PC-3 (cell line): ENCODE measurements at regions of chr13 and their contacts with region 1.

Region 1: GRCh38 chr13:100514788-100515409 is 73.7 kb downstream of the GGACT start:
- DNase-seq: peak; percentile 69
- ATAC-seq: peak; percentile 96
- H3K4me3 ChIP-seq: no peak overlapping the region
- H3K27ac ChIP-seq: no peak overlapping the region
- H3K4me1 ChIP-seq: peaks cover 4% of the 10 kb centered on the region; the same call in 1 of the 2 replicates
- H3K27me3 ChIP-seq: no peaks in the 10 kb centered on the region
- CTCF ChIP-seq: peak; percentile 91

Region 2: GRCh38 chr13:99656092-99656745 is 858.7 kb before region 1 on chr13:
- CTCF ChIA-PET with region 1: interaction called, 4 read pairs
- POLR2A ChIA-PET with region 1: no interaction called
- intact Hi-C with region 1: loop called (anchors 5 kb)
- DNase-seq: peak; percentile 72
- ATAC-seq: peak; percentile 87
- H3K4me3 ChIP-seq: peak overlapping the region; percentile 27; the same call in 1 of the 2 replicates
- H3K27ac ChIP-seq: no peak overlapping the region
- H3K4me1 ChIP-seq: no peaks in the 10 kb centered on the region
- H3K27me3 ChIP-seq: no peaks in the 10 kb centered on the region
- CTCF ChIP-seq: peak; percentile 85

Region 3: GRCh38 chr13:99916366-99917103 is 598.4 kb before region 1 on chr13:
- CTCF ChIA-PET with region 1: interaction called, 3 read pairs
- POLR2A ChIA-PET with region 1: no interaction called
- intact Hi-C with region 1: loop called (anchors 1 kb)
- DNase-seq: peak; percentile 69
- ATAC-seq: peak; percentile 88
- H3K4me3 ChIP-seq: no peak overlapping the region
- H3K27ac ChIP-seq: no peak overlapping the region
- H3K4me1 ChIP-seq: no peaks in the 10 kb centered on the region
- H3K27me3 ChIP-seq: peaks cover 22% of the 10 kb centered on the region
- CTCF ChIP-seq: peak; percentile 95

Region 4: DNA sequence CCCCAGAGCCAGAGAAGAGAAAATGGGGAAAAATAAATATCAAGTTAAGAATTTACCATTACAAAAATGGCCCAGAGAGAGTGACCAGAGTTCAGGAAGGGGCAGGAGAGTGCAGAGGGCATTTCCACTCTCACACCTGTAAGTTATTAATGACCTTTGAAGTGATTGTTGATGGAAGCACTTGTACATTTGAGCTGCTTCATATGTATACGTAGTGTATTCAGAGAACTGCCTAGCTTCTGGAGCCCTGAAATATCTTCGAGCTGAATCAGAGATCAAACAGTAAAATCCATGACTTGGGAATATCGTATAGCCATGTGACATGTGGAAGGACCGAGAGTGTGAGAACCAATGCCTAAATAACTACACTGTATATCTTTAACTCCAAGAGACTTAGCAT is 475.2 kb before region 1 on chr13:
- CTCF ChIA-PET with region 1: no interaction called
- POLR2A ChIA-PET with region 1: no interaction called
- intact Hi-C with region 1: loop called (anchors 5 kb)
- DNase-seq: peak; percentile 53
- ATAC-seq: peak; percentile 64
- H3K4me3 ChIP-seq: peak overlapping the region; percentile 30; the same call in 1 of the 2 replicates
- H3K27ac ChIP-seq: no peak overlapping the region
- H3K4me1 ChIP-seq: peaks cover 9% of the 10 kb centered on the region; the same call in 1 of the 2 replicates
- H3K27me3 ChIP-seq: no peaks in the 10 kb centered on the region
- CTCF ChIP-seq: no peak

Region 5: GRCh38 chr13:100347941-100348340 is 167.0 kb before region 1 on chr13:
- CTCF ChIA-PET with region 1: no interaction called
- POLR2A ChIA-PET with region 1: no interaction called
- intact Hi-C with region 1: loop called (anchors 5 kb)
- DNase-seq: peak; percentile 50
- ATAC-seq: peak; percentile 96
- H3K4me3 ChIP-seq: no peak overlapping the region
- H3K27ac ChIP-seq: no peak overlapping the region
- H3K4me1 ChIP-seq: peaks cover 9% of the 10 kb centered on the region
- H3K27me3 ChIP-seq: no peaks in the 10 kb centered on the region
- CTCF ChIP-seq: no peak

Region 6: DNA sequence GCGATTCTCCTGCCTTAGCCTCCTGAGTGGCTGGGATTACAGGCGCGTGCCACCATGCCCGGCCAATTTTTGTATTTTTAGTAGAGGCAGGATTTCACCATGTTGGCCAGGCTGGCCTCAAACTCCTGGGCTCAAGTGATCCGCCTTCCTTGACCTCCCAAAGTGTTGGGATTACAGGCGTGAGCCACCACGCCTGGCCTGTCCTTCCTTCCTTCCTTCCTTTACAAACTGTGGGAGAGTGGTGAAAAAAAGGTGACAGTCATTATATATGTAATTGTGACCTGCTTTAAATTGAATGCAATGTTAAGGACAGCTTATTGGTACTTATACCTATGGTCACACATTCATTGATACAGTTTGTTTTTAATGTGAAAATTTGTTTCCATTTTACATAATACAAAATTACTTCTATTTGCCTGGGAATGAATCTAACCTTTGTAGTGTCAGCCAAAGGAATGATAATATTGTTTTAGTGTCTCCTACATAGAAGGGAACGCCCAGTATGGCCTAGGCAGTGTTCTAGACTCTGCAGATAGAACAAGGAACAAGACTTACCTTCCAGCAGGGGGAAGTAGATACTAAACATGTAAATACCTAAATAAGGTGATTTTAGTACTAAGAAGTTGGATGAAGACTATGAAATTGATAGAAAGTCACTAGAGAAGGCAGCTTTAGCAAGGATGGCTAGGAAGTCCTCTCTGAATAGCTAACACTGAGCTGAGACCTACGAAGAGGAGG is 72.6 kb before region 1 on chr13:
- CTCF ChIA-PET with region 1: no interaction called
- POLR2A ChIA-PET with region 1: no interaction called
- intact Hi-C with region 1: loop called (anchors 2 kb)
- DNase-seq: no peak
- ATAC-seq: no peak
- H3K4me3 ChIP-seq: no peak overlapping the region
- H3K27ac ChIP-seq: no peak overlapping the region
- H3K4me1 ChIP-seq: no peaks in the 10 kb centered on the region
- H3K27me3 ChIP-seq: no peaks in the 10 kb centered on the region
- CTCF ChIP-seq: peak; percentile 18; the same call in 1 of the 2 replicates

Region 7: DNA sequence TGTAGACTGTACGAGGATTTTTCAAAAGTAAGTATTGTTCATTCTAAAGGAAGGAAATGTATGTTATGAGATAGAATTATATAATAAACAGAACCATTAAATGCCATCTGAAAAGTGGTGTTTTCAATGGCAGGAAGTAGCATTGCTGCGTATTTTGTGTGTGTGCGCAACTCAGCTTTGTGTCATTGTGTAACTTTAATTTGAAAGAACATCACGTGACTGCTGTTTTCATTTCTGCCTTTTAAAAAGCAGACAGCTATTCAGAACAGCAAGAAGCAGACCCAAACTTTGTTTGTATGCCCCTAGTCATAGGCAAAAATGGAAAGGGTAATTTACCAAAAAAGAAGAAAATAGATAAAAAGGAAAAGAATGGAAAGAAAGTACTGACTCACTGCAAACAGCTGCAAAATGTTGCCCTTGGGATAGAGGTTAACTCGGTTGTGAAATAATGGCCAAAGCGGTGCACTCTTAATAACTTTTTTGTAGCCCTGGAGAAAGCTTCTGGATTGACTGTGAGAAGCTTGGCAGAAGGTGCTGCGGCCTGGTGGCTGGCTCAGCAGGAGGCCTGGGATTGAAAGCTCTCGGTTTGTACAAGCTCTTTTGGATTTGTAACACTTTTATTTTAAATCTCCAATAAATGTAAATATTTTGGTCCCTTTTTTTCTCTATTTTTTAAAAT is 23.6 kb before region 1 on chr13:
- CTCF ChIA-PET with region 1: no interaction called
- POLR2A ChIA-PET with region 1: no interaction called
- intact Hi-C with region 1: no loop called
- DNase-seq: no peak
- ATAC-seq: no peak
- H3K4me3 ChIP-seq: no peak overlapping the region
- H3K27ac ChIP-seq: no peak overlapping the region
- H3K4me1 ChIP-seq: no peaks in the 10 kb centered on the region
- H3K27me3 ChIP-seq: no peaks in the 10 kb centered on the region
- CTCF ChIP-seq: no peak

Region 8: DNA sequence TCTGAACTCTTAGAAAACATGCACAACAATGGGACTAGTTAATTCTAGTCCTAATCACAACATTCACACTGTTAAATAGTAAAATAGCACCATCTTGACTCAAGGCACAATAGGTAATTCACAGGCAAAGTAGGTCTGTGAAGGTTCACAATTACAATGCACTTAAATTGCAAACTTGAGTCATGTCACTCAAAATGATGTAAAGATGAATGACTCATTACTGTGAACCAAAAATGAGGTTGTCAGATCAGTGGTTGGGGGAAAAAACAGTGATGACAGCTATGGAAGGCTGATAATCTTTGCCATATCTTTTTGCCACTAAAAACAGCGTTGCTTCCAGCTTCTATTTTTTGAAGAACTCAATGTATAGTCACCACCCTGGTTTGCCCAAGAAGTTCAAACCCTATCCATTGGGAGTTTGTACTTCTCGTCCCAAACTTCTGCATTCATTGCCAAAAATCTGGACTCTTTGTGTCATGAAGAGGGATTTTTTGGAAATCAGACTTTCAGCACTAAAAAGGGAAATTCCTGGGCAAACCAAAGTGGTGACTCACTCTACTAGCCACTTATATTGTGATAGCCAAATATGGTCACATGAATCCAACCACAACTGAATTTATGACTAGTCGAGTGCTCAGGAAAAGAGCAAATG is 360.6 kb after region 1 on chr13:
- CTCF ChIA-PET with region 1: no interaction called
- POLR2A ChIA-PET with region 1: no interaction called
- intact Hi-C with region 1: no loop called
- DNase-seq: peak; percentile 83
- ATAC-seq: peak; percentile 93
- H3K4me3 ChIP-seq: no peak overlapping the region
- H3K27ac ChIP-seq: peak overlapping the region; percentile 80
- H3K4me1 ChIP-seq: peaks cover 13% of the 10 kb centered on the region
- H3K27me3 ChIP-seq: no peaks in the 10 kb centered on the region
- CTCF ChIP-seq: no peak